ENCODE measurements at regions of chr10 and their contacts with region 1.

Region 1: DNA sequence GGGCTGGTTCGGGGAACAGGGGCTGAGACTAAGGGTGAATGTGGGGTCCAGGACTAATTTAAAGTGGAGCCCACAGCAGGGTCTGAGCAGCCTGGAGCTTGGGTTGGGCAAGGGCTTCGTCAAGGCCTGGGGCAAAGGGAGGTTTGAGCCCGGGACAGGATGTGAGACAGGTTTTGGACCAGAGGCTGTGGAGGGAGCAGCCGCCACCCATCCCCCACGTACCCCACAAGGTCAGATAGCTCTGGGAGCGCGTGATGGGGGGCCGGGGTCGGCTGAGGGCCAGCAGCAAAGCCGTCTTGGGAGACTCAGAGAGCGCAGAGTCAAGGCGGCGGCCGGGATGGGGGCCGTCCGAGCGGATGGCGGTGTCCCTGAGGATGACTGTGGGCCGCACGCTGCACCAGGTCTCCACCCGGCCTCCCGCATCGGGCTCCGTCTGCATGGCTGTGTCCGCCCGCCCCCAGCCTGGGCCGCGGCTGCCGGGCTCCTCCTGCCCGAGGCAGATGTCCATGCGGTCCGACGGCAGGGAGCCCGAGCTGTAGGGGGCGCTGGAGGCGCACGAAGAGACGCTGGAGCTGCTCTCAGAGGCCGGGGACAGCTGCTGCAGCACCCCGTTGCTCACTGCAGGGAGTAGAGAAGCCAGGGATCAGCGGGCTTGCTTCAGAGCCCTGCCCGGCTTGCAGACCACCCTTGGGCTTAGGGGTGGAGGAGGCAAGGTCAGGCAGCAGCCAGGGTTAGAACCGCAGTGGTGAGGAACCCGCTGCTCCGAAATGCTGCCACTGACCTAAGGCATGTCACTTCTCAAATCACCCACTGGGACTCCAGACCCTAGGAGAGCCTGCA is 12.1 kb downstream of the PDZD7 start:
- DNase-seq: peak; percentile 87
- H3K4me3 Mint-ChIP-seq: no peak overlapping the region
- H3K27ac Mint-ChIP-seq: no peak overlapping the region
- H3K4me1 Mint-ChIP-seq: peaks cover 8% of the 10 kb centered on the region
- H3K27me3 Mint-ChIP-seq: peaks cover 41% of the 10 kb centered on the region

Region 2: GRCh38 chr10:100403734-100404133 is 615.1 kb before region 1 on chr10:
- CTCF ChIA-PET with region 1: no interaction called
- intact Hi-C with region 1: no loop called
- DNase-seq: no peak
- H3K4me3 Mint-ChIP-seq: no peak overlapping the region
- H3K27ac Mint-ChIP-seq: no peak overlapping the region
- H3K4me1 Mint-ChIP-seq: no peaks in the 10 kb centered on the region
- H3K27me3 Mint-ChIP-seq: no peaks in the 10 kb centered on the region

Region 3: GRCh38 chr10:100927266-100927665 is 91.6 kb before region 1 on chr10:
- CTCF ChIA-PET with region 1: no interaction called
- intact Hi-C with region 1: no loop called
- DNase-seq: no peak
- H3K4me3 Mint-ChIP-seq: no peak overlapping the region
- H3K27ac Mint-ChIP-seq: no peak overlapping the region
- H3K4me1 Mint-ChIP-seq: peaks cover 7% of the 10 kb centered on the region
- H3K27me3 Mint-ChIP-seq: no peaks in the 10 kb centered on the region

Region 4: GRCh38 chr10:101007099-101007711 is 11.6 kb before region 1 on chr10:
- CTCF ChIA-PET with region 1: interaction called, 30 read pairs
- intact Hi-C with region 1: no loop called
- DNase-seq: no peak
- H3K4me3 Mint-ChIP-seq: no peak overlapping the region
- H3K27ac Mint-ChIP-seq: no peak overlapping the region
- H3K4me1 Mint-ChIP-seq: no peaks in the 10 kb centered on the region
- H3K27me3 Mint-ChIP-seq: no peaks in the 10 kb centered on the region

Region 5: GRCh38 chr10:101042667-101043355 is 24.0 kb after region 1 on chr10:
- CTCF ChIA-PET with region 1: interaction called, 19 read pairs
- intact Hi-C with region 1: no loop called
- DNase-seq: peak; percentile 97
- H3K4me3 Mint-ChIP-seq: peak overlapping the region; percentile 91
- H3K27ac Mint-ChIP-seq: peak overlapping the region; percentile 74
- H3K4me1 Mint-ChIP-seq: peaks cover 22% of the 10 kb centered on the region
- H3K27me3 Mint-ChIP-seq: peaks cover 17% of the 10 kb centered on the region

Region 6: GRCh38 chr10:101050208-101051069 is 31.6 kb after region 1 on chr10:
- CTCF ChIA-PET with region 1: interaction called, 20 read pairs
- intact Hi-C with region 1: no loop called
- DNase-seq: peak; percentile 81
- H3K4me3 Mint-ChIP-seq: no peak overlapping the region
- H3K27ac Mint-ChIP-seq: no peak overlapping the region
- H3K4me1 Mint-ChIP-seq: peaks cover 9% of the 10 kb centered on the region
- H3K27me3 Mint-ChIP-seq: peaks cover 48% of the 10 kb centered on the region

Region 7: DNA sequence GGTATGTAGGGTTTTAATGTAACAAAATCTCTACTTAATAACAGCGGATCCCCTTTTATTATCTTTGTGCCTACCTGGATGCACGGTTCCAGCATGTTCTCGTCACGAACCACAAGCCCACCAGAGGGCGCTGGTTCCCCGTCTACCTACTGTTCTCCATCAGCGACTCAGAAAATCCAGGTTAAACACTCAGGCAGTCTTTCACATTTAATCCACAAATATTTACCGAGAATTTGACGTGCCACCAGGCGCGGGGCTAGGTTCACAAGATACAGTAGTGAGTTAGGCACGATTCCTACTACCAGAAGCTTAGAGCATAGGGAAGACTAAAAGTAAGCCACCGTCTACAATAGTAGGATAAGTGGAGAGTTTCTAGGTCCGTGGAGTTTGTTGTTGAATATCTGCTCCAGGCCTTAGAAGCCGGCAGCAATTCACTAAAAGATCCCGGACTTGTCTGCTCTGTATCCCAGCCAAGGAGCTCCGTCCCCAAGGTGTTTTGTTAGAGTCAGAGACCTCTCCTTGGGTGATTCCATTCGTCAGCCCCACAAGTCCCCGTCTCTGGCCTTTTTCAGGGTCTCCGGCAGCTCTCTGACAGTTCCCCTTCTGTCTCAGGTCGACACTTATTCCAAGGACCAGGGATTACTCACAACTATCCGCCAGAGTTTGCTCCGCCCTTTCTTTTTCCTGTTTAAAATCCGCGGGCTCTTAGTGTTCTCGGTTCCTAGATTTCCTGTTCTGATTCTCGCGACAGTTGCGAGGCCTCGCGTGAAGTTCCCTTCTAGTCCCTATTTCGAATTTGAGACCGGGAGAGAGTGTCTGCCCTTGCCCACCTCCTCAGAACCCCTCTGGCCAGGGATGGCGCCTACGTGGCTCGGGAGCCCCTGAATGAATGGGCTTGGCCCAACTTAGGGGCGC is 41.5 kb after region 1 on chr10:
- CTCF ChIA-PET with region 1: interaction called, 19 read pairs
- intact Hi-C with region 1: loop called (anchors 2 kb)
- DNase-seq: peak; percentile 96
- H3K4me3 Mint-ChIP-seq: peak overlapping the region; percentile 87
- H3K27ac Mint-ChIP-seq: peak overlapping the region; percentile 93
- H3K4me1 Mint-ChIP-seq: peaks cover 29% of the 10 kb centered on the region
- H3K27me3 Mint-ChIP-seq: peaks cover 24% of the 10 kb centered on the region

Region 8: DNA sequence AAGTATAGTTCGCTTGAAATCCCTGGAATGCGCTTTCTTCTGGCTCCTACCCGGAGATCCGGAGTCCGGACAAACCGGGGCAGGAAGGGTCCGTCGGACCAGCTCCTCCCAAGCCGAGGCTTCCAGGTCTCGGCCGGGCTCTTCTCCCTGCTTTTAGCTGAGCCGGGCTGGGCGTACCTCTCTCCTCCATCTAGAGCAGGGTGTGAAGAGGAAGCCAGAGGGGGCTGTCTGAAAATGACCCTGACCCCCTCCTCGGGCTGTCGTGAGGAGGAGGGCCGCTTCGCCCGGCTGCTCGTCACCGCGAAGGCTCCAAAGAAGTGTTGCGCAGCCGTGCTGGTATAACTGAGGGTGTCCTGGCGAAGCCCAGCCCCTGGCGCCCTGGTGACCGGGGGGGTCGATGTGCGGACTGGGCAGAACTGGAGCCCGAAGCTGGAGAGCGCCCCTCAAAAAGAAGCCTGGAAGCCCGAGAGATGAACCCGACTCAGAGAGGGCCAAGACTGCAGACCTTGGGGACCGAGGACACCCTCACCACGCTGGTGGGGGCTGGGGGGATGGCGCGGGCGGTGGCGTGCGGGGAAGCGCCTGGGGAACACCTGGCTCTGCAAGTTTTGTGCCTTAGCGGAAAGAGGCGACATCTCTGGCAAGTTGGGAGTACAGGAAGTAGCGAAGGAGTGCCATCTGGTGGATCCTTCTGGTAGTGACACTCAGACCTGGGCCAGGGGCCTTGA is 48.7 kb after region 1 on chr10:
- CTCF ChIA-PET with region 1: interaction called, 19 read pairs
- intact Hi-C with region 1: loop called (anchors 1 kb)
- DNase-seq: peak; percentile 90
- H3K4me3 Mint-ChIP-seq: peak overlapping the region; percentile 66
- H3K27ac Mint-ChIP-seq: no peak overlapping the region
- H3K4me1 Mint-ChIP-seq: peaks cover 23% of the 10 kb centered on the region
- H3K27me3 Mint-ChIP-seq: peaks cover 40% of the 10 kb centered on the region

Measured in activated naive CD4-positive, alpha-beta T cell treated with anti-CD3 and anti-CD28 coated beads for 36 hours (primary cell).